Mammary epithelial cell (primary cell): ENCODE measurements at regions of chr15 and their contacts with region 1.

Region 1: DNA sequence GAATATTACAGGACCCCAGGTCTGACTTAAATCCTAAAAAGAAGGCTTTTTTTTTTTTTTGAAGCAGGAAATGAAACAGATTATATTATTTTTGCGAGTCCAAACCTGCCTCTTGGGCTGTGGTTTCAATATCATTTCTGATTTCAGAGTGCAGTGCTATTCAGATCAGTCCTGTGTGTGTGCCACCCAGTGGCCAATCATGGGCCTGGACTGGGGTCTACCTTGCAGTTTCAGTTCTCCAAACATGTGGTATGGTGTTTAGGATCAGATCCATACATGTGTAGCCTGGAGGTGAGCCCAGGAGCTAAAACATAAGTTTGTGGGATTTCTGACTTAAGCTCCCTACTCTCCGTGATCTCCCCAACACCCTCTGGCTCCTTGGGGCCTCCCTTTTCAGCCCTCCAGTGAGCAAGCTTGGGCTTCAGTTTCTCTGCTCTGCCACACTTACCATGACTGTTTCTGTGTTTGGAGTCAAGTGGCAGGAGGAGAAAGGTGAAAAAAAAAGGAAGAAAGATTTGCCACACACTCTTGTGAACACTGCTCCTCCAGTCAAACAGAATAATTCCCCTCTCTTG is 12.1 kb upstream of the THSD4 start:
- DNase-seq: peak; percentile 69
- H3K4me3 ChIP-seq: no peak overlapping the region
- H3K27ac ChIP-seq: peak overlapping the region; percentile 33
- H3K4me1 ChIP-seq: peaks cover 25% of the 10 kb centered on the region
- H3K27me3 ChIP-seq: no peaks in the 10 kb centered on the region
- CTCF ChIP-seq: peak; percentile 56 to 69

Region 2: DNA sequence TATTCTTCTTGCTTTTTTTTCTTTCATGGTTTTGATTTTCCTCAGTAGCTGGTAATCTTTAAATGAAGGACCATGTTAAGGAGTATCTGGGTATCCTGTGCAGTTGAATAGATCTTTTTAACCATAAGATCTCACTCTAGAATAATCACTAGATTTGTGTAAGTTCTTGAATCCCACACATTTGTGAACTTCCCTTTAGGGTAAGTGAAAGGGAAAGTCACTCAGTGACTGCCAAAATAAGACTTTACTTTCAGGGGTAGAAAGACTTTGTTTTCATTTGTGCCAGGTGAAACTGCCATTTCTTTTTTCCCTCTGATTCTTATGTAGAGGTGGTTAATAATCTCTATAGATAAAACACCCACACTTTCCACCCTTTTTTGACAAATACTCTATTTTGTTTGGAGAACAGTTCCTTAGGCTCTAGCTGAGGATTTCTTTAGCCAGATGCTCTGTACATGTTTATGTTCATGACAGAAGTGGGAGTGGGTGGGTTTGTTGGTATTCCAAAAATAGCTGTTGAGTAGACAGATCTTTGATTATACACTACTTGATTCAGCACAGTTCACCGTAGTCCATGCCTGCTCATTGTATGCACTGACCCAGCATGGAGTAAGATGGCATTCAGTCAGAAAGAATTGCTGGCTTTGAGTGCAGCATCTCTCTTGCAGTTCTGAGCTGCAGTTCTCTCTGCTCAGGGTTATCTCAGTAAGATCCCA is 182.1 kb before region 1 on chr15:
- CTCF ChIA-PET with region 1: no interaction called
- dilution Hi-C with region 1: no loop called
- in situ Hi-C with region 1: no loop called
- intact Hi-C with region 1: no loop called
- DNase-seq: no peak
- H3K4me3 ChIP-seq: no peak overlapping the region
- H3K27ac ChIP-seq: no peak overlapping the region
- H3K4me1 ChIP-seq: peaks cover 4% of the 10 kb centered on the region
- H3K27me3 ChIP-seq: no peaks in the 10 kb centered on the region
- CTCF ChIP-seq: no peak

Region 3: DNA sequence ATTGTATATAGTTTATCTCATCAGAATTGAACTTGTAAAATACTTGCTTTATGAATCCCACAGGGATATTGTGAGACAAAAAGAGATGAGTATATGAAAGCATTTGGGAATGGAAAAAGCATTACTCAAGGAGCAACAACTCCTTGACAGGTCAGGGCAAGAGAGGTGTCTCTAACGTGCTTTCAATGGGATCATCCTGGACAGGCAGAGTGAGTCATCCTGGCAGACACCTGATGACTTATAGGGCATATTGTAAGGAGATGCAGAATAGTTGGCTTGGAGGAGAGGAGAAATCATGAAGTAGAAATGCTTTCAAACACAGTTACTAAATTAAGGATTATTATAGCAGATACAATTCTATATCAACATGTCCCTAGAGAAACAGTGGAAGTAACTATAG is 59.8 kb before region 1 on chr15:
- CTCF ChIA-PET with region 1: no interaction called
- dilution Hi-C with region 1: no loop called
- in situ Hi-C with region 1: no loop called
- intact Hi-C with region 1: loop called (anchors 2 kb)
- DNase-seq: peak; percentile 95
- H3K4me3 ChIP-seq: no peak overlapping the region
- H3K27ac ChIP-seq: peak overlapping the region; percentile 89
- H3K4me1 ChIP-seq: peaks cover 31% of the 10 kb centered on the region
- H3K27me3 ChIP-seq: no peaks in the 10 kb centered on the region
- CTCF ChIP-seq: no peak